GM12878 (cell line): ENCODE measurements at regions of chr11 and their contacts with region 1.

Region 1: DNA sequence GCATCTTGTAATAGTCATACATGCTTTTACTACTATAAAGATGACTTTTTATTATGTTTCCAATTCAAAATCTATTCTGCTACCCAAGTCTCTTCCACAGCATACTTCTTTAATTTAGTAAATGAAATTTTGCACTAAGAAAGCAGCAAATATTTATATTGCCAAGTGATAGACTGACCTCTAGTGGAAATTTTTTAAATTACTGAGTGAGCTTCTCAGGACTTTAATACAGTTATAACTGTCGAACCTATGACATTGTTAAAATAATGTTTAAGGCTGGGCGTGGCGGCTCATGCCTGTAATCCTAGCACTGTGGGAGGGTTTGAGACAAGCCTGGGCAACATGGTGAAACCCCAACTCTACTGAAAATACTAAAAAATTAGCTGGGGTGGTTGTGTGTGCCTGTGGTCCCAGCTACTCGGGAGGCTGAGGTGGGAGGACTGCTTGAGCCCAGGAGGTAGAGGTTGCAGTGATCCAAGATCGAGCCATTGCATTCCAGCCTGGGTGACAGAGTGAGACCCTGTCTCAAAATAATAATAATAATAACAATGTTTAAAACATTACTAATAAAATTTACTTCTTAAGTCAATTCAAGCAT is 27.3 kb downstream of the STK33 start:
- DNase-seq: peak; percentile 32
- ATAC-seq: peak; percentile 78
- H3K4me3 ChIP-seq: no peak overlapping the region
- H3K27ac ChIP-seq: no peak overlapping the region
- H3K4me1 ChIP-seq: peaks cover 5% of the 10 kb centered on the region; the same call in 1 of the 2 replicates
- H3K27me3 ChIP-seq: no peaks in the 10 kb centered on the region
- CTCF ChIP-seq: peak; percentile 40 to 63 (median 45); a peak in 4 of 6 replicates
- EP300 ChIP-seq: no peak
- POLR2A ChIP-seq: no peak
- RAD21 ChIP-seq: peak; percentile 82

Region 2: GRCh38 chr11:8033305-8034105 is 533.2 kb before region 1 on chr11:
- CTCF ChIA-PET with region 1: no interaction called
- POLR2A ChIA-PET with region 1: no interaction called
- RAD21 ChIA-PET with region 1: no interaction called
- SMC1A ChIA-PET with region 1: no interaction called
- in situ Hi-C with region 1: no loop called
- intact Hi-C with region 1: no loop called
- DNase-seq: no peak
- ATAC-seq: peak; percentile 93
- H3K4me3 ChIP-seq: no peak overlapping the region
- H3K27ac ChIP-seq: no peak overlapping the region
- H3K4me1 ChIP-seq: no peaks in the 10 kb centered on the region
- H3K27me3 ChIP-seq: no peaks in the 10 kb centered on the region; a peak in 1 of 4 replicates
- CTCF ChIP-seq: peak; percentile 81 to 90 (median 85)
- EP300 ChIP-seq: no peak
- POLR2A ChIP-seq: no peak
- RAD21 ChIP-seq: peak; percentile 67

Region 3: DNA sequence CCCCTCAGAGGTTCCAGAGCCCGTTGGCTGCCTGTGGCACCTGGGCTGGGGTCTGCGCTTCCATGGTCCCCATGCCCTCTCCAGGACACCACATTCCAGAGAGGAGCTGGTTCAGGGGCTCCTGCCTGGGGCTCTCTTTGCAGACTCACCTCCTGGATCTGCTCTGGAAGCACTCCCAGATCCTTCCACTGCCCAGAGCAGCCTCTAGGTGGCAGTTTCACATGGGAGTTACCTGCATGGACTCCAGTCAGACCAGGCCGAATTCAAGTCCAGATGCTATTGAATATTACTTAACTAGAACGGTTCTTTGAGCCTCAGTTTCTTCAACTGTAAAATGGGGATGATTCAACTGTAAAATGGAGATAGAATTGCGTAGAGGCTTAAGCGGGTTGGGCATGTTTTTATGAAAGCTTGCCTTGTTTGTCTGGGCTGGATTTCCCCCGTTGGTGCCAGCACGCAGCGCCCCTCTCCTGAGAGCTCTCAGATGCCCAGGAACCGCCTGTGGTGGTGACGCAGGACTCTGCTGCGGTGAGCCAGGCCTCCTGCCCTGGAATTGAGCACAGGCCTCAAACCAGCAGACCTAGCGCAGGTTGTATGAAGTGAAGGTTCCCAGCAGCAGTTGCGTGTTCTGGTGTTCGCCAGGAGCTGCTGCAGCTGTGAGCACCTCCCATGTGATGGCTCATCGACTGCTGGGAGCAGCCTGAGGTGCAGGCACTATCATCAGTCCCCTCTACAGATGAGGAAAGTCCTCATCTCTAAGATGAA is 347.3 kb before region 1 on chr11:
- CTCF ChIA-PET with region 1: interaction called, 66 read pairs
- POLR2A ChIA-PET with region 1: no interaction called
- RAD21 ChIA-PET with region 1: interaction called, 16 read pairs
- SMC1A ChIA-PET with region 1: interaction called, 20 read pairs
- in situ Hi-C with region 1: no loop called
- intact Hi-C with region 1: no loop called
- DNase-seq: no peak
- ATAC-seq: peak; percentile 90
- H3K4me3 ChIP-seq: no peak overlapping the region
- H3K27ac ChIP-seq: no peak overlapping the region
- H3K4me1 ChIP-seq: no peaks in the 10 kb centered on the region; the same call in 1 of the 2 replicates
- H3K27me3 ChIP-seq: no peaks in the 10 kb centered on the region
- CTCF ChIP-seq: peak; percentile 71 to 75 (median 71)
- EP300 ChIP-seq: no peak
- POLR2A ChIP-seq: no peak
- RAD21 ChIP-seq: peak; percentile 41

Region 4: GRCh38 chr11:8263769-8264410 is 302.8 kb before region 1 on chr11 and contains the start of gene LMO1:
- CTCF ChIA-PET with region 1: interaction called, 50 read pairs
- POLR2A ChIA-PET with region 1: no interaction called
- RAD21 ChIA-PET with region 1: interaction called, 10 read pairs
- SMC1A ChIA-PET with region 1: interaction called, 20 read pairs
- in situ Hi-C with region 1: no loop called
- intact Hi-C with region 1: no loop called
- DNase-seq: no peak
- ATAC-seq: peak; percentile 87
- H3K4me3 ChIP-seq: peak within 1 kb of the TSS; percentile 50
- H3K27ac ChIP-seq: no peak within 1 kb of the TSS
- H3K4me1 ChIP-seq: no peaks in the 10 kb centered on the region
- H3K27me3 ChIP-seq: peaks cover 20 to 24% of the 10 kb centered on the region in 2 experiments
- CTCF ChIP-seq: peak; percentile 83 to 93 (median 92)
- EP300 ChIP-seq: no peak
- POLR2A ChIP-seq: no peak
- RAD21 ChIP-seq: peak; percentile 52
- polyA plus RNA-seq, gene LMO1: not detected

Region 5: GRCh38 chr11:8338138-8338537 is 228.6 kb before region 1 on chr11:
- CTCF ChIA-PET with region 1: interaction called, 15 read pairs
- POLR2A ChIA-PET with region 1: no interaction called
- RAD21 ChIA-PET with region 1: interaction called, 6 read pairs
- SMC1A ChIA-PET with region 1: interaction called, 24 read pairs
- in situ Hi-C with region 1: loop called (anchors 5 kb)
- intact Hi-C with region 1: no loop called
- DNase-seq: no peak
- ATAC-seq: peak; percentile 87
- H3K4me3 ChIP-seq: no peak overlapping the region
- H3K27ac ChIP-seq: no peak overlapping the region
- H3K4me1 ChIP-seq: peaks cover 7% of the 10 kb centered on the region
- H3K27me3 ChIP-seq: no peaks in the 10 kb centered on the region
- CTCF ChIP-seq: peak; percentile 62 to 84 (median 79)
- EP300 ChIP-seq: no peak
- POLR2A ChIP-seq: no peak
- RAD21 ChIP-seq: peak; percentile 52

Region 6: DNA sequence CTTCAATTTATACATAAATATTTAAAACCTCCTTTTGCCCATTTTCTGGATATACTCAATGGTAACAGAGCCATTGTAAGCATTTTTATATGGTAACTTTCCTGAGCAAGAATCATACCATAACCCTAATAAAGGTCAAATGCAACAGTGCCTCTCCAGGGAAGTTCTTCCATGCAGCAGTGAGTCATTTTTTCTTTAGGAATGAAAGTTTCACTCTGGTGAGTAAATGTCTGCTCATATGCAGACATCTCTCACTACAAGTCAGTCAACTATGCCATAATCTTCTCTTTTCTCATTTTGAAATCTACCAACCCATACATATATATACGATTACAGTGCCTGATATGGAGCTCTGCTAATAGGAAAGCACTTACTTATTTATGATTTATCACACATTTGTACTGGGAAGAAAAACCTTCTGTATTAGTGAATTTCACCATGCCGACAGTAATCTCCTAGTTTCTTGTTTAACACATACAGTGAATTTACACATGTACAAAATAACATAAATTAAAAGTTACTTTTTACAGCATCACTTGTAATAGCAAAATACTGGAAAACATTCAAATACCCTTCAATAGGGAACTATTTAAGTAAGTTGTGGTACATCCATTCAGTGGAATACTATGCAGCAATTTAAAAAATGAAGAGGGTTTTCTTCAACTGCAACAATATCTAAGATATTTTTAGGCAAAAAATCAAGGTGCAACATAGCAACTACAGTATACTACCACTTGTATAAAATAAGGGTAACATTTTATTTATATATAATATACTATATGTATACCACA is 11.3 kb after region 1 on chr11:
- CTCF ChIA-PET with region 1: interaction called, 9 read pairs
- POLR2A ChIA-PET with region 1: no interaction called
- RAD21 ChIA-PET with region 1: interaction called, 12 read pairs
- SMC1A ChIA-PET with region 1: interaction called, 19 read pairs
- in situ Hi-C with region 1: no loop called
- intact Hi-C with region 1: no loop called
- DNase-seq: no peak
- ATAC-seq: no peak
- H3K4me3 ChIP-seq: no peak overlapping the region
- H3K27ac ChIP-seq: no peak overlapping the region
- H3K4me1 ChIP-seq: no peaks in the 10 kb centered on the region
- H3K27me3 ChIP-seq: no peaks in the 10 kb centered on the region
- CTCF ChIP-seq: no peak
- EP300 ChIP-seq: no peak
- POLR2A ChIP-seq: no peak
- RAD21 ChIP-seq: no peak

Region 7: GRCh38 chr11:8964324-8965320 is 397.9 kb after region 1 on chr11 and contains the start of gene TMEM9B:
- CTCF ChIA-PET with region 1: interaction called, 27 read pairs
- POLR2A ChIA-PET with region 1: no interaction called
- RAD21 ChIA-PET with region 1: interaction called, 31 read pairs
- SMC1A ChIA-PET with region 1: interaction called, 14 read pairs
- in situ Hi-C with region 1: no loop called
- intact Hi-C with region 1: loop called (anchors 5 kb)
- DNase-seq: peak; percentile 62
- ATAC-seq: peak; percentile 89
- H3K4me3 ChIP-seq: peak within 1 kb of the TSS; percentile 83
- H3K27ac ChIP-seq: peak within 1 kb of the TSS; percentile 92
- H3K4me1 ChIP-seq: peaks cover 5% of the 10 kb centered on the region
- H3K27me3 ChIP-seq: no peaks in the 10 kb centered on the region
- CTCF ChIP-seq: no peak
- EP300 ChIP-seq: no peak; a peak in 1 of 4 replicates
- POLR2A ChIP-seq: peak; percentile 87
- RAD21 ChIP-seq: no peak
- polyA plus RNA-seq, gene TMEM9B: 11.5 to 16.6 TPM

Region 8: GRCh38 chr11:9384535-9385303 is 818.0 kb after region 1 on chr11 and contains the start of gene IPO7:
- CTCF ChIA-PET with region 1: no interaction called
- POLR2A ChIA-PET with region 1: no interaction called
- RAD21 ChIA-PET with region 1: no interaction called
- SMC1A ChIA-PET with region 1: no interaction called
- in situ Hi-C with region 1: no loop called
- intact Hi-C with region 1: no loop called
- DNase-seq: peak; percentile 60
- ATAC-seq: peak; percentile 97
- H3K4me3 ChIP-seq: peak within 1 kb of the TSS; percentile 97
- H3K27ac ChIP-seq: peak within 1 kb of the TSS; percentile 91
- H3K4me1 ChIP-seq: peaks cover 3% of the 10 kb centered on the region; the same call in 1 of the 2 replicates
- H3K27me3 ChIP-seq: no peaks in the 10 kb centered on the region
- CTCF ChIP-seq: peak in 2 of 3 experiments; percentile 10 to 13; a peak in 1 of 6 replicates
- EP300 ChIP-seq: 0 out of 4 replicates have a peak, but pooled peaks of 1 of the 2 experiments have one; percentile 20
- POLR2A ChIP-seq: peak; percentile 99
- RAD21 ChIP-seq: no peak
- polyA plus RNA-seq, gene IPO7: 9.2 to 9.9 TPM